Activated B cell treated with CpG ODN at 0.5 μM for 24 hours (primary cell): ENCODE measurements at regions of chr10 and their contacts with region 1.

Region 1: DNA sequence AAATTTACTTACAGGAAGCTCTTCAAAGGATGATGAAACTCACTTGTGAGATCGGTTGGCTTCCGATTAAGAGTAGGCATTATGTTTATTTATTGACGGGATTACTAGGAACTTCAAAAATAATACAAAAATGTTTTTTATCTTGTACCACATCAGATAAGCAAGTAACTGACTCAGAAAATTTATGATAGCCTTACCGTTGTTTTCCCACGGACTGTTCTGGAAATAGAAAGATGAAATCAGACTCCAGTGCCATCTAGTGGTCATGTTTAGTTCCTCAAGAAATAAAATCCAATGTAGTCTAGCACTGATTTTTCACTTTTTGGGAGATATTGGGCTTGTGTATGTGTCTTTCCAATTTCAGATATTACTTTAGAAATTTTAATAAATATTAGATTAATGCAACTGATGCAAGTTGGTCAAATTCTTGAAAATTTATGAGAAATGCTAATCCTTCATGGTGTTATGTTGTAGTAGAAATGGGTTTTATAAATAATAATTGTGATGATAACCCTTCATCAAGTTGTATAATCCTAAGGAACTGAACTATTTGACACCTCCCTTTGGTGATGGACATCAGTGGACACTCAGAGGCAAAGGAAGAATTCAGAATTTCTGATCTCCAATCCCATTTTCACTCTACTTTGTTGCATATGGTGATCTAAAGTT is 168.8 kb downstream of the TMEM26 start:
- DNase-seq: no peak
- ATAC-seq: no peak
- H3K4me3 Mint-ChIP-seq: peak overlapping the region; percentile 41
- H3K27ac Mint-ChIP-seq: no peak overlapping the region
- H3K4me1 Mint-ChIP-seq: peaks cover 24% of the 10 kb centered on the region
- H3K27me3 Mint-ChIP-seq: peaks cover 7% of the 10 kb centered on the region
- CTCF ChIP-seq: peak; percentile 75

Region 2: DNA sequence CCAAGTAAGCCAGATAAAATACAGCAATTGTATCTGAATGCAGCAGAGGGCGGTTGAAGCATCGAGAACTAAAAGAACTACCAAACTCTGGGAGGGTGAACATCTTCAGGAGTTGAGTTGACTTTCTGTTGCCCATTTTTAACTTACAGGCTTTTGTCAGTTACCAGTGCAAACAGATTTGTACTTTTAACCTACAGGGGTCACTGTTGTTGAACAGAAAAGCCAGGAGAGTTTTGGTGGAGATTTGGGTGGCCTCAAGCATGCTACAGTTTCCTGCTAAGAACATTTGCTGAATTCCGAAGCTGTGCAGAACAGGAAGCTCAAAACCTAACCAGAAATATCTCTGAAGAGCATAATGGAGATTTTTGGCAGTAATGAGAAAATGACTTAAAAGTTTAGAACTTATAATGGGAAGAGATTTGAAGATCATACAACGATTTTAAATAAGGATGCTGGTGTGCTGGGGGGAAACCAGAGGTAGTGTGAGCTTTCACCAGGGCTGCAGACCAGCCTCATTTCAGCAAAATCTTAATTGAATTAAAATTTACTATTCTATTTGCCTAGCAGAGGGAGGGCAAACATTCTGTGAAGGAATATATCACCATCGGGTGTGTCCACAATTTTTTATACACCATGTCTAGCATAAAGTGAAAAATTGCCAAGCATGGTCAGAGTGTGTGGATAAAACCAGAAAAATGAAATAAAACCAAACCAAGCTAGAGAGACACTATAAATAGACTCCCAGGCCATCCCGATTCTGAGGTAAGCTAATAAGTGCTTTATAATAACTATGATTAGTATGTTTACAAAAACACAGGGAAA is 1169.4 kb before region 1 on chr10:
- CTCF ChIA-PET with region 1: no interaction called
- POLR2A ChIA-PET with region 1: no interaction called
- intact Hi-C with region 1: loop called (anchors 10 kb)
- DNase-seq: no peak
- ATAC-seq: peak; percentile 64
- H3K4me3 Mint-ChIP-seq: no peak overlapping the region
- H3K27ac Mint-ChIP-seq: no peak overlapping the region
- H3K4me1 Mint-ChIP-seq: no peaks in the 10 kb centered on the region
- H3K27me3 Mint-ChIP-seq: no peaks in the 10 kb centered on the region
- CTCF ChIP-seq: no peak

Region 3: GRCh38 chr10:60733189-60733822 is 551.0 kb before region 1 on chr10:
- CTCF ChIA-PET with region 1: no interaction called
- POLR2A ChIA-PET with region 1: no interaction called
- intact Hi-C with region 1: loop called (anchors 2 kb)
- DNase-seq: peak; percentile 45
- ATAC-seq: peak; percentile 83
- H3K4me3 Mint-ChIP-seq: peak overlapping the region; percentile 93
- H3K27ac Mint-ChIP-seq: no peak overlapping the region
- H3K4me1 Mint-ChIP-seq: peaks cover 36% of the 10 kb centered on the region
- H3K27me3 Mint-ChIP-seq: peaks cover 4% of the 10 kb centered on the region
- CTCF ChIP-seq: no peak

Region 4: GRCh38 chr10:60883187-60883586 is 401.2 kb before region 1 on chr10:
- CTCF ChIA-PET with region 1: no interaction called
- POLR2A ChIA-PET with region 1: no interaction called
- intact Hi-C with region 1: loop called (anchors 2 kb)
- DNase-seq: no peak
- ATAC-seq: peak; percentile 40
- H3K4me3 Mint-ChIP-seq: no peak overlapping the region
- H3K27ac Mint-ChIP-seq: no peak overlapping the region
- H3K4me1 Mint-ChIP-seq: no peaks in the 10 kb centered on the region
- H3K27me3 Mint-ChIP-seq: no peaks in the 10 kb centered on the region
- CTCF ChIP-seq: no peak

Region 5: GRCh38 chr10:61024856-61025600 is 259.3 kb before region 1 on chr10:
- CTCF ChIA-PET with region 1: interaction called, 5 read pairs
- POLR2A ChIA-PET with region 1: no interaction called
- intact Hi-C with region 1: loop called (anchors 1 kb)
- DNase-seq: no peak
- ATAC-seq: peak; percentile 45
- H3K4me3 Mint-ChIP-seq: no peak overlapping the region
- H3K27ac Mint-ChIP-seq: no peak overlapping the region
- H3K4me1 Mint-ChIP-seq: no peaks in the 10 kb centered on the region
- H3K27me3 Mint-ChIP-seq: peaks cover 21% of the 10 kb centered on the region
- CTCF ChIP-seq: no peak

Region 6: GRCh38 chr10:61397175-61397986 is 113.0 kb after region 1 on chr10:
- CTCF ChIA-PET with region 1: no interaction called
- POLR2A ChIA-PET with region 1: no interaction called
- intact Hi-C with region 1: loop called (anchors 1 kb)
- DNase-seq: no peak
- ATAC-seq: peak; percentile 70
- H3K4me3 Mint-ChIP-seq: peak overlapping the region; percentile 59
- H3K27ac Mint-ChIP-seq: peak overlapping the region; percentile 16
- H3K4me1 Mint-ChIP-seq: peaks cover 18% of the 10 kb centered on the region
- H3K27me3 Mint-ChIP-seq: no peaks in the 10 kb centered on the region
- CTCF ChIP-seq: no peak

Region 7: GRCh38 chr10:62244780-62245467 is 960.6 kb after region 1 on chr10:
- CTCF ChIA-PET with region 1: no interaction called
- POLR2A ChIA-PET with region 1: no interaction called
- intact Hi-C with region 1: loop called (anchors 5 kb)
- DNase-seq: no peak
- ATAC-seq: peak; percentile 64
- H3K4me3 Mint-ChIP-seq: peak overlapping the region; percentile 57
- H3K27ac Mint-ChIP-seq: peak overlapping the region; percentile 72
- H3K4me1 Mint-ChIP-seq: peaks cover 45% of the 10 kb centered on the region
- H3K27me3 Mint-ChIP-seq: no peaks in the 10 kb centered on the region
- CTCF ChIP-seq: peak; percentile 74